ENCODE measurements at regions of chr16 and their contacts with region 1.

Region 1: GRCh38 chr16:56317998-56318826 is 107.1 kb downstream of the AMFR start:
- DNase-seq: peak; percentile 85
- ATAC-seq: peak; percentile 100
- H3K4me3 Mint-ChIP-seq: peak overlapping the region; percentile 7
- H3K27ac Mint-ChIP-seq: no peak overlapping the region
- H3K4me1 Mint-ChIP-seq: peaks cover 3% of the 10 kb centered on the region
- H3K27me3 Mint-ChIP-seq: peaks cover 4% of the 10 kb centered on the region
- CTCF ChIP-seq: peak; percentile 93

Region 2: DNA sequence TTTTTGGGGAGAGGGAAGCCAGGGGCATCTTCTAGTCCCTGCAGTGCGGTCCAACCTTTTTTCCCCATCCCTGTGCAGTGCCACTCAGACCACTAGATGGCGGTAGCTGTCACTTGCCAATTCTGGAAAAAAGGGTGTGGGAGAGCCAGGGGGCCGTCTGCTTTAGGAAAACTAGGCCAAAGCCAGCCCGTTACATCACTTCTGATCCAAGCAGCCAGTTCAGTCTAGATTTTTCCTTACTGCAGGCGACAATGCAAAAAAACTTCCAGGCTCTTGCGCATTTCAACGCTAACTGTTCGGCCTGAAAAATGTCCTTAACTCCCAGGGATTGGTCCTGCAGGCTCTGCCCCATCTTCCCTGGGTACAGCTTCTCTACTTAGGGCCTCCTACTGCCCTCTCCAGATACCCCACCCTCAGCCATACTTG is 373.8 kb before region 1 on chr16:
- CTCF ChIA-PET with region 1: interaction called, 55 read pairs
- POLR2A ChIA-PET with region 1: no interaction called
- intact Hi-C with region 1: loop called (anchors 2 kb)
- DNase-seq: peak; percentile 56
- ATAC-seq: peak; percentile 49
- H3K4me3 Mint-ChIP-seq: no peak overlapping the region
- H3K27ac Mint-ChIP-seq: no peak overlapping the region
- H3K4me1 Mint-ChIP-seq: no peaks in the 10 kb centered on the region
- H3K27me3 Mint-ChIP-seq: peaks cover 43% of the 10 kb centered on the region
- CTCF ChIP-seq: peak; percentile 92

Region 3: GRCh38 chr16:56041686-56042085 is 276.5 kb before region 1 on chr16:
- CTCF ChIA-PET with region 1: interaction called, 21 read pairs
- POLR2A ChIA-PET with region 1: no interaction called
- intact Hi-C with region 1: loop called (anchors 5 kb)
- DNase-seq: peak; percentile 42
- ATAC-seq: peak; percentile 90
- H3K4me3 Mint-ChIP-seq: no peak overlapping the region
- H3K27ac Mint-ChIP-seq: no peak overlapping the region
- H3K4me1 Mint-ChIP-seq: no peaks in the 10 kb centered on the region
- H3K27me3 Mint-ChIP-seq: peaks cover 22% of the 10 kb centered on the region
- CTCF ChIP-seq: peak; percentile 33

Region 4: GRCh38 chr16:56203052-56203451 is 115.2 kb before region 1 on chr16:
- CTCF ChIA-PET with region 1: interaction called, 15 read pairs
- POLR2A ChIA-PET with region 1: no interaction called
- intact Hi-C with region 1: no loop called
- DNase-seq: peak; percentile 76
- ATAC-seq: peak; percentile 81
- H3K4me3 Mint-ChIP-seq: no peak overlapping the region
- H3K27ac Mint-ChIP-seq: no peak overlapping the region
- H3K4me1 Mint-ChIP-seq: no peaks in the 10 kb centered on the region
- H3K27me3 Mint-ChIP-seq: peaks cover 5% of the 10 kb centered on the region
- CTCF ChIP-seq: peak; percentile 67

Region 5: DNA sequence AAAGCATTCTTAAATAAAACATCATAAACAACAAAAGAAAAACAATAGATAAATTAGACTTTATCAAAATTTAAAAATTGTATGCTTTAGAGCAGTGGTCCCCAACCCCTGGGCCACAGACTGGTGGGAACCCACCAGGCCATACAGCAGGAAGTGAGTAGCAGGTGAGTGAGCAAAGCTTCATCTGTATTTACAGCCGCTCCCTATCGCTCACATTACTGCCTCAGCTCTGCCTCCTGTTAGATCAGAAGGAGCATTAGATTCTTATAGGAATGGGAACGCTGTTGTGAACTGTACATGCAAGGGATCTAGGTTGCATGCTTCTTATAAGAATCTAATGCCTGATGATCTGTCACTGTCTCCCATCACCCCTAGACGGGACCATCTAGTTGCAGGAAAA is 75.5 kb before region 1 on chr16:
- CTCF ChIA-PET with region 1: no interaction called
- POLR2A ChIA-PET with region 1: no interaction called
- intact Hi-C with region 1: loop called (anchors 2 kb)
- DNase-seq: no peak
- ATAC-seq: no peak
- H3K4me3 Mint-ChIP-seq: no peak overlapping the region
- H3K27ac Mint-ChIP-seq: no peak overlapping the region
- H3K4me1 Mint-ChIP-seq: no peaks in the 10 kb centered on the region
- H3K27me3 Mint-ChIP-seq: no peaks in the 10 kb centered on the region
- CTCF ChIP-seq: no peak

Region 6: DNA sequence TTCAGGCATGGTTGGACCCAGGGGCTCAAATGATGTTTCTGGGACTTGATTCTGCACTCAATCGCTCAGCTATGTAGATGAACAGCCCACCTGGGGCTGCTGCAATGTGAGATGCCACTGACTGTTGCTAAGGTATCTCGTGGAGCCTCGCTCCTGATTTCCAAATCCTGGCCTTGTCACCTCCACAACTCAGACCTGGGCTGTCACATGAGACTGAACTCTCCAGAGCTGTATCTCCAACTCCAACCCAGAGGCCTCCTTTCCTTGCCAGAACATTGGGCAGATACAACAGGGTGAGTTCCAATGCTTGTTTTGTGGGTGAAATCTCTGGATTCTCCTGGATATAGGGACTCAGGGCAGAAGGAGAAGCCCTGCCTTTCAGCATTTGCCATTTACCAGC is 47.4 kb before region 1 on chr16:
- CTCF ChIA-PET with region 1: no interaction called
- POLR2A ChIA-PET with region 1: no interaction called
- intact Hi-C with region 1: no loop called
- DNase-seq: no peak
- ATAC-seq: no peak
- H3K4me3 Mint-ChIP-seq: no peak overlapping the region
- H3K27ac Mint-ChIP-seq: no peak overlapping the region
- H3K4me1 Mint-ChIP-seq: no peaks in the 10 kb centered on the region
- H3K27me3 Mint-ChIP-seq: peaks cover 3% of the 10 kb centered on the region
- CTCF ChIP-seq: no peak

Region 7: DNA sequence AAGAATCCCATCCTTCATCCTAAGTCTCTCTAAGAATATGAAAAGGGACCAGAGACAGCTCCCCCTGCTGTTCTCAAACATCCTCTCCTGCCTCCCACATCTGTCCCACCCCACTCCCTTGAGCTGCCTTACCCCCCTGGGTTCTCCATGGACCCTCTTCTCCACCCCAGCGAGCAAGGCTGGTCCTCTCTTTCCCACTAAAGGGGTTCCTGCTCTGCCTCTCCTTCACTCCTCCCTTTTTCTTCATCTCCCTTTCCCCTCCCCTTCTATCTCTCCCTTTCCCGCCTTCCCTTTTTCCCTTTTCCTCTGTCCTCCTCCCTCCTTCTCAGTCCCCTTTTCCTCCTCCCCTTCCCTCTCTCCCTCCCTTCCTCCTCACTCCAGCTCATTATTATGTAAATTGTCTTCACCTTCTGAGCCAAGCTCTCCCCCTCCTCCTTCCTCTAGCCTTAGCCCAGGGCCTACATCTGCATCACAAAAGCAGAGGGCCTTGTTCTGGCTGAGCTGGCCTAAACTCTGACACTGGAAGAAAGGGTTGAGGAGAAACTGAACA is 36.9 kb before region 1 on chr16:
- CTCF ChIA-PET with region 1: interaction called, 11 read pairs
- POLR2A ChIA-PET with region 1: no interaction called
- intact Hi-C with region 1: no loop called
- DNase-seq: peak; percentile 18
- ATAC-seq: no peak
- H3K4me3 Mint-ChIP-seq: no peak overlapping the region
- H3K27ac Mint-ChIP-seq: no peak overlapping the region
- H3K4me1 Mint-ChIP-seq: peaks cover 22% of the 10 kb centered on the region
- H3K27me3 Mint-ChIP-seq: no peaks in the 10 kb centered on the region
- CTCF ChIP-seq: peak; percentile 42

Region 8: GRCh38 chr16:56300891-56301850 is 17.0 kb before region 1 on chr16:
- CTCF ChIA-PET with region 1: interaction called, 25 read pairs
- POLR2A ChIA-PET with region 1: no interaction called
- intact Hi-C with region 1: no loop called
- DNase-seq: no peak
- ATAC-seq: no peak
- H3K4me3 Mint-ChIP-seq: no peak overlapping the region
- H3K27ac Mint-ChIP-seq: no peak overlapping the region
- H3K4me1 Mint-ChIP-seq: peaks cover 11% of the 10 kb centered on the region
- H3K27me3 Mint-ChIP-seq: peaks cover 3% of the 10 kb centered on the region
- CTCF ChIP-seq: no peak

Region 9: DNA sequence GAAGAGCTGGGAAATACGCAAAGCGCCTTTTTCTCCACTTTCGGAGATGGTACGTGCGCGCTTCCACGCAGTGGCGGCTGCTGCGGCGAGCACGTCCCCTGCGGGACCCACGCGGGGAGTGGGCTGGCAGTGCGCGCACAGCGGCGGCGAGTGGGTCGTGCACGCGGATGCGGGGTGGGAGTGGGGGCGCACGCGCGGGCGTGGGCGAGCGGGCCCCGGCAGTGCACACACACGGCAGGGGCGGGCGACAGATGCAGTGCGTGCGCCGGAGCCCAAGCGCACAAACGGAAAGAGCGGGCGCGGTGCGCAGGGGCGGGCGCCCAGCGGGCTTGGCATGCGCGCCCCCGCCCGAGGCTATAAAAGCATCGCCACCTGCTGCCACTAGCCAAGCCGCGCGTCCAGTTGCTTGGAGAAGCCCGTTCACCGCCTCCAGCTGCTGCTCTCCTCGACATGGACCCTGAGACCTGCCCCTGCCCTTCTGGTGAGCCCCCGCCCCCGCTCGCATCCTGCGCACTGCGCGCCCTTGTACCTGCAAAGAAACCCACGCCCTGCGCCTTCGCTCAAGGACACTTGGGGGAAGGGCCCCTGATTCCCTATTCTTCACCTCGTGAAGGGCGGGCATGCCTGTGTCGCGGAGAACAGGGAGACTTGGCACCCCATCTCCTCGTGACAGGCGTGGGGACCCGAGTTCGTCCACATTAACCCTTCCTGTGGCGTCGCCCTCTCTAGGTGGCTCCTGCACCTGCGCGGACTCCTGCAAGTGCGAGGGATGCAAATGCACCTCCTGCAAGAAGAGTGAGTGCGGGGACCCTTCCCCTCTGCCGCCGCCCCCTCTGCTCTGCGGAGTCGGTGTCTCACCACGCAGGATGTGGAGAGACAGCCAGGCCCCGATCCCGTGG is 271.2 kb after region 1 on chr16 and contains the start of gene MT3:
- CTCF ChIA-PET with region 1: no interaction called
- POLR2A ChIA-PET with region 1: no interaction called
- intact Hi-C with region 1: no loop called
- DNase-seq: peak; percentile 68
- ATAC-seq: peak; percentile 89
- H3K4me3 Mint-ChIP-seq: peak within 1 kb of the TSS; percentile 78
- H3K27ac Mint-ChIP-seq: peak within 1 kb of the TSS; percentile 2
- H3K4me1 Mint-ChIP-seq: peaks cover 9% of the 10 kb centered on the region
- H3K27me3 Mint-ChIP-seq: peaks cover 12% of the 10 kb centered on the region
- CTCF ChIP-seq: no peak
- total RNA-seq, gene MT3: 30.7 to 33.6 TPM

Measured in activated CD8-positive, alpha-beta T cell treated with anti-CD3 and anti-CD28 coated beads for 36 hours (primary cell).